Common myeloid progenitor, CD34-positive (primary cell): ENCODE measurements at regions of chr4 and their contacts with region 1.

Region 1: DNA sequence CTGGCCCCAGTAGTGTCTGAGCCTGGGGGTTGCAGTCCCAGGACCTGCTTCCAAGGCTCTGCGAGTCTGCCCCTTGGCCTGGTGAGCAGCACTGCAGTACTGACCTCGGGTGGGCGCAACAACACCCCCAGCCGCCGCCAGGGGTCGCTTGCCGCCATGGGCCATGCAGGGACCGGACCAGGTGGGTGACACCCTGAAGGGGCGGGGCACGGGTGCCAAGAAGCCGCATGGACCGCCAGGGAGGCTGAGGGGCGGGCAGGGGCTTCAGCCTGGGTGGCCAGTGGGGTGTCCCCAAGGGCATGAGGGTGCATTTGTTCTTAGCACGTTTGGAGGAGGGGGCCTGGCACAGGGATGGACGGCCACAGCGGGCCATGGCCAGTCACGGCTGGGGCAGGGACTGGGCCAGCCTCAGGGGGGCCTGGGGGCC is 25.0 kb downstream of the TACC3 start:
- DNase-seq: peak; percentile 86 to 94 (median 92)
- H3K4me3 ChIP-seq: no peak overlapping the region
- H3K27ac ChIP-seq: no peak overlapping the region
- H3K4me1 ChIP-seq: peaks cover 0 to 20% (median 14%) of the 10 kb centered on the region in 4 experiments
- H3K27me3 ChIP-seq: no peaks in the 10 kb centered on the region

Region 2: DNA sequence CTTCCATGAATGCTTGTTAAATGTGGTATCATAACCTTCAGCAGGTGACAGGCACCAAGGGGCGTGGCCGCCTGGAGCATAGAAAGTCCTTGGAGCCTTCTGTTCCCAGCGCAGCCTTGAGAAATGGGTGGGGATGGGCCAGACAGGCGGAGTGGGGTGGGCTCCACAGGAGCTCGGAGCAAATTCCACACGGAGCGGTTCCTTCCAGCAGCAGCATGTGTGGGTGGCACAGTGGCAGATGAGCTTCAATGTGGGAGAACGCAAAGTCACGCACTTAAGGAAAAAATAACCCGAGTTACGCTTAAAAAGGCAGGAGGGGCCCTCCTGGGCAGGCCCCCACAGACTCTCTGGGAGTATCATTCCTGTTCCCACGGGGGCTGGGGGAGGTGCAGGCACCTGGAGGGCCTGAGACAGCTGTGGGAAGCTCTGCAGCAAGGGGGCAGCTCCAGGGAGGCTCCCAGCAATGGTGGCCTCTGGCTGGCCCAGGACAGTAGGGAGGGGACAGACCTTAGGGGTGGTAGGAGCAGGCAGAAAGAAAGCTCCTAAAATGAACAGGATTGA is 1185.5 kb before region 1 on chr4:
- CTCF ChIA-PET with region 1: no interaction called
- POLR2A ChIA-PET with region 1: no interaction called
- DNase-seq: no peak
- H3K4me3 ChIP-seq: no peak overlapping the region
- H3K27ac ChIP-seq: no peak overlapping the region
- H3K4me1 ChIP-seq: no peaks in the 10 kb centered on the region
- H3K27me3 ChIP-seq: peaks cover 0 to 8% (median 2%) of the 10 kb centered on the region in 5 experiments

Region 3: DNA sequence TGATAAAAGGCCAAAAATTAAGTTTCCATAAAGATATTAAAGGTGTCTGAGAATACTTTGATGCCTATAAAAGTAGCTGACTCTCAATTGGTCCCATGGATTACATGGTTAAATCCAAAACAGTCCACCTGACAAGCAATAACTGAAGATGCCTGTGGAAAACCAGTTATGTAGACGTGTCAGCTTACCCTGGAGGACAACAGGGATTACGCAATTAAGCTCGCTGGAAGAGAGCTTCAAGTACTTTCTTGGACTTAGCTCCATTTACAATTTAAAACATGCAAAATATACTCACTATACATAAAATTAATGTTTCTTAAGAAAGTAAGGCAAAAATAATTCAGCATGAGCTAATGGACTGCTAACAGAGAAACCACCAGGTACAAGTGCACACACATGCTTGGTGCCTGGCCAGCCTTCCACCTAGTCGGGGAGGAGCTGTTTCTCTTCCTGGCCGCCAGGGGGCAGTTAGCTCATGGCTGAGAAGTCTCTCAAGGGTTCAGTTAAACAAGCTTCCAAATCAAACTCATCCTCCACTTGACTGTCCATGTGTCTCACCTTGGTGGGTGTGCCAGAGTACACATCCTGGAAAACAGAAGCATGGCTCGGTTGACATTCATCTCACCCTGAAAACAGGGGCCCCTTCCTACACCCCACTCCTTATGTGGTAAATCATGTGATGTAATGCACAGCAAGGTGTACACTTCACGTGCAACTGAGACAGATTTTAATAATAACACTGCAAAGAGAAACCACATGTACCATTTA is 53.0 kb before region 1 on chr4:
- CTCF ChIA-PET with region 1: interaction called, 13 read pairs
- POLR2A ChIA-PET with region 1: no interaction called
- DNase-seq: peak; percentile 80 to 91 (median 91)
- H3K4me3 ChIP-seq: no peak overlapping the region
- H3K27ac ChIP-seq: no peak overlapping the region
- H3K4me1 ChIP-seq: no peaks in the 10 kb centered on the region
- H3K27me3 ChIP-seq: no peaks in the 10 kb centered on the region

Region 4: GRCh38 chr4:1763550-1764080 is 17.3 kb after region 1 on chr4:
- CTCF ChIA-PET with region 1: interaction called, 23 read pairs
- POLR2A ChIA-PET with region 1: no interaction called
- DNase-seq: peak; percentile 39 to 64 (median 61)
- H3K4me3 ChIP-seq: peak overlapping the region in 3 of 7 experiments; percentile 46 to 54 (median 48)
- H3K27ac ChIP-seq: no peak overlapping the region
- H3K4me1 ChIP-seq: peaks cover 0 to 38% (median 31%) of the 10 kb centered on the region in 4 experiments
- H3K27me3 ChIP-seq: peaks cover 0 to 12% (median 0%) of the 10 kb centered on the region in 5 experiments

Region 5: DNA sequence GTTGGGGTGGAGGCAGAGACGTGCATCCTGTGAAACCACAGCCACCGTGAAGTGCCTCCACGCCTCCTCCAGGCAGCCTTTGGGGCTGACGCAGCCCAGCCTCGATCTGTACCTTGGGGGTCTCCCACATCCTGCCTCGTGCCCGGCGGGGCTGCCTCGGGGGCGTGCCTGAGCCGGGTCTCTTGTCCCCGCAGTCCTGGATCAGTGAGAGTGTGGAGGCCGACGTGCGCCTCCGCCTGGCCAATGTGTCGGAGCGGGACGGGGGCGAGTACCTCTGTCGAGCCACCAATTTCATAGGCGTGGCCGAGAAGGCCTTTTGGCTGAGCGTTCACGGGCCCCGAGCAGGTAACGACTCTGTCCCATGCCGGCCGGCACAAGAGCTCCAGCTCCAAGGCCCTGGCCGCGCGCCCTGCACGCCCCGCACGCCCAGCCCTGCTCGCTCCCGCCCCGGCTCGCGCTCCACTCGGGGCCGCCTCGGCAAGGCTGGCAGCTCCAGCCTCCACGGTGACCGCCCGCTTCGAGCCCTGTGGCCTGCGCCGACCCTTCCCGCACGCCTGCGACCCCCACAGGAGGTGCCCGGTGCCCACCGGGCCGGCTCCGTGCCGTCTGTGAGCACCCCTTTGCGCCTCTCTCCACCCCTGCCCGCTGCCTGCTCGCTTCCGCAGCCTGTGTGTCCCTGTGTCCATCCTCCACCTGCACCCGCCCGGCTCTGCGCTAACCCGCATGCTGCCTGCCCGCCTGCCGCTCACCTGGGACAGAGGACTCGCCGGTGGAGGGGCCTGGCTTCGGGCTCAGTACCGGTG is 56.6 kb after region 1 on chr4:
- CTCF ChIA-PET with region 1: interaction called, 168 read pairs
- POLR2A ChIA-PET with region 1: no interaction called
- DNase-seq: no peak
- H3K4me3 ChIP-seq: no peak overlapping the region
- H3K27ac ChIP-seq: no peak overlapping the region
- H3K4me1 ChIP-seq: no peaks in the 10 kb centered on the region
- H3K27me3 ChIP-seq: no peaks in the 10 kb centered on the region

Region 6: DNA sequence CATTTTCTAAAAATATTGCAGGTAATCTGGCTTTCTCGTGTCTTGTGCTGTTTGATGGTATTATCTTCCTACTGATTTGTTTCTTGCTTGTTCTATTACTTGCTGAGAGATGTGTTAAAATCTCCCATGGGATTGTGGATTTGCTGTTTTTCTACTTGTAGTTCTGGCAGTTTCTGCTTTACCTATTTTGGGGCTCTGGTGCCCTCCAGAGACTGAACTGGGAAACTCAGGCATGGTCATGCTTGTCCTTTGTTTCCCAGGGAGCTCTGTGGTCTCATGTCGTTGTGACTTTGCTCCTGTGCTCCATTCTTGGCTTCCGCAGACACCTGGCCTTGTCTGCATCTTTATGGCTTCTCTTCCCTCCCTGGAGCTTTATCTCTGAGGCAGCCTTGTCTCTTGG is 164.4 kb after region 1 on chr4:
- CTCF ChIA-PET with region 1: interaction called, 44 read pairs
- POLR2A ChIA-PET with region 1: no interaction called
- DNase-seq: peak; percentile 27 to 57 (median 52)
- H3K4me3 ChIP-seq: no peak overlapping the region
- H3K27ac ChIP-seq: no peak overlapping the region
- H3K4me1 ChIP-seq: peaks cover 0 to 3% (median 0%) of the 10 kb centered on the region in 4 experiments
- H3K27me3 ChIP-seq: no peaks in the 10 kb centered on the region